CD4-positive, alpha-beta memory T cell (primary cell): ENCODE measurements at regions of chr3 and their contacts with region 1.

Region 1: GRCh38 chr3:189961525-189962161 is 159.1 kb downstream of the P3H2 start:
- DNase-seq: peak; percentile 40 to 53 (median 50)
- H3K4me3 ChIP-seq: no peak overlapping the region
- H3K4me3 Mint-ChIP-seq: no peak overlapping the region
- H3K27ac ChIP-seq: no peak overlapping the region
- H3K27ac Mint-ChIP-seq: no peak overlapping the region
- H3K4me1 ChIP-seq: peaks cover 6% of the 10 kb centered on the region
- H3K4me1 Mint-ChIP-seq: peaks cover 2 to 8% (median 5%) of the 10 kb centered on the region in 4 donors
- H3K27me3 ChIP-seq: no peaks in the 10 kb centered on the region
- H3K27me3 Mint-ChIP-seq: peaks cover 11 to 14% of the 10 kb centered on the region in 2 donors

Region 2: GRCh38 chr3:189937307-189938124 is 24.1 kb before region 1 on chr3:
- CTCF ChIA-PET with region 1: interaction called, 35 read pairs
- POLR2A ChIA-PET with region 1: no interaction called
- intact Hi-C with region 1: no loop called
- DNase-seq: no peak
- H3K4me3 ChIP-seq: no peak overlapping the region
- H3K4me3 Mint-ChIP-seq: no peak overlapping the region
- H3K27ac ChIP-seq: no peak overlapping the region
- H3K27ac Mint-ChIP-seq: no peak overlapping the region
- H3K4me1 ChIP-seq: no peaks in the 10 kb centered on the region
- H3K4me1 Mint-ChIP-seq: no peaks in the 10 kb centered on the region
- H3K27me3 ChIP-seq: no peaks in the 10 kb centered on the region
- H3K27me3 Mint-ChIP-seq: peaks cover 4% of the 10 kb centered on the region in 2 donors

Region 3: GRCh38 chr3:189947948-189948723 is 13.5 kb before region 1 on chr3:
- CTCF ChIA-PET with region 1: interaction called, 77 read pairs
- POLR2A ChIA-PET with region 1: no interaction called
- intact Hi-C with region 1: no loop called
- DNase-seq: peak in 3 of 5 donors; percentile 13 to 15 (median 15)
- H3K4me3 ChIP-seq: no peak overlapping the region
- H3K4me3 Mint-ChIP-seq: peak overlapping the region in 1 of 8 donors; percentile 30
- H3K27ac ChIP-seq: no peak overlapping the region
- H3K27ac Mint-ChIP-seq: no peak overlapping the region
- H3K4me1 ChIP-seq: peaks cover 6% of the 10 kb centered on the region
- H3K4me1 Mint-ChIP-seq: peaks cover 0 to 4% (median 4%) of the 10 kb centered on the region in 4 donors
- H3K27me3 ChIP-seq: no peaks in the 10 kb centered on the region
- H3K27me3 Mint-ChIP-seq: peaks cover 2 to 10% of the 10 kb centered on the region in 2 donors

Region 4: GRCh38 chr3:189975391-189975990 is 13.8 kb after region 1 on chr3:
- CTCF ChIA-PET with region 1: interaction called, 52 read pairs
- POLR2A ChIA-PET with region 1: no interaction called
- intact Hi-C with region 1: no loop called
- DNase-seq: no peak
- H3K4me3 ChIP-seq: no peak overlapping the region
- H3K4me3 Mint-ChIP-seq: no peak overlapping the region
- H3K27ac ChIP-seq: no peak overlapping the region
- H3K27ac Mint-ChIP-seq: no peak overlapping the region
- H3K4me1 ChIP-seq: no peaks in the 10 kb centered on the region
- H3K4me1 Mint-ChIP-seq: no peaks in the 10 kb centered on the region
- H3K27me3 ChIP-seq: no peaks in the 10 kb centered on the region
- H3K27me3 Mint-ChIP-seq: peaks cover 22 to 24% of the 10 kb centered on the region in 2 donors

Region 5: DNA sequence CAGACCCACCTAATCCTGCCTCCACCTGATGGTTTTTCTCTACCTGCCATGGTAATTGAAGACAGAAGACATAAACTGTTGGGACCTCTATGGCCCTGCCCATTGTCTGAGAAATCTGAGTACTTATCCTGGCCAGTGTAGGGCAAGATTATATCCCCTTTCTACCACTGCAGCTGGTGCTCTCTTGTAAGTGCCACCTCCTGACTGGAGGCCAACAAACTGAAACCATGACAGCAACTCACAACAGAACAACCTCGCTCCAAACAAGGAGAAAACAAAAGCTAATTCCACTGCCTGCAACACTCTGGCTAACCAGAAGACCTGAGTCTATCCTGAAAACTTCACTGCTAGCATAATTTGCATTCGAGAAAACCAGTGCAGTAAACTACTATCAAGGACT is 277.7 kb after region 1 on chr3:
- CTCF ChIA-PET with region 1: no interaction called
- POLR2A ChIA-PET with region 1: no interaction called
- intact Hi-C with region 1: no loop called
- DNase-seq: no peak
- H3K4me3 ChIP-seq: no peak overlapping the region
- H3K4me3 Mint-ChIP-seq: no peak overlapping the region
- H3K27ac ChIP-seq: no peak overlapping the region
- H3K27ac Mint-ChIP-seq: no peak overlapping the region
- H3K4me1 ChIP-seq: no peaks in the 10 kb centered on the region
- H3K4me1 Mint-ChIP-seq: no peaks in the 10 kb centered on the region
- H3K27me3 ChIP-seq: no peaks in the 10 kb centered on the region
- H3K27me3 Mint-ChIP-seq: peaks cover 1 to 2% of the 10 kb centered on the region in 2 donors